Endothelial cell of umbilical vein (primary cell): ENCODE measurements at regions of chr3 and their contacts with region 1.

Region 1: GRCh38 chr3:184448311-184449160 is 68.7 kb downstream of the CHRD start:
- DNase-seq: peak; percentile 96
- H3K4me3 ChIP-seq: no peak overlapping the region
- H3K27ac ChIP-seq: peak overlapping the region; percentile 71
- H3K4me1 ChIP-seq: peaks cover 17% of the 10 kb centered on the region
- H3K27me3 ChIP-seq: no peaks in the 10 kb centered on the region
- CTCF ChIP-seq: no peak
- POLR2A ChIP-seq: no peak

Region 2: DNA sequence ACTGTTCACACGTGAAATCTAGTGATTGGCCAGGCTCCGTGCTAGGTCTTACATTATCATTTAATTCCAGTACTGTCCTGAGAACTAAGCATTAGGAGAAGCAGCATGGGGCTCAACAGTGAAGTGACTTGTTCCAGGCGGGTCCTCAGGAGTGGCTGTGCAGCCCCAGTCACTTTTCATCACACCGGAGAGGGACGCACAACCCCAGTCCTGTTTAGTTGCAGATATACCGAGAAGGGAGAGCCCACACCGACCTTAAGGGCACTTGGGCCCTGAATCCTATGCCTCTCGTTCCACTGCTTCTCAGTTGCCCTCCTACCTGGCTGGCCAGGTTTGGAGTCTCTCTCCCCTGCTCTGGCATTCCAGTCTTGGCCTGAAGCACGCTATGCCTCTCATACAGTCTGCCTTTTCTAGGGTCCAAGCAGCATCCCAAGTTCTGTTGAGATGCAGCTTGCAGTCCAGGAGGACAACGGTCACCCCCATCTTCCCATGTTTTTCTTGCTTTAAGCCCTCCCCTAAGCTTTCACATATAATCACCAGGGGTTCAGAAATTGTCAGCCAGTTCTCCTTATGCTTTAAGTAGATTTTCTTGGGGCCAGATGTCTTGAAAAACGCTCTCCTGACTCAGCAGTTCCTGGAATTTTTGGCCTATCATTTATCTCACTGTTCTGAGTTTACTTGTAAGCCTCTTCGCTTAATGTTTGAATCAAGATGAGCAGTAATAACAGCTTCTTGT is 101.0 kb before region 1 on chr3:
- CTCF ChIA-PET with region 1: no interaction called
- POLR2A ChIA-PET with region 1: no interaction called
- dilution Hi-C with region 1: no loop called
- intact Hi-C with region 1: no loop called
- DNase-seq: no peak
- H3K4me3 ChIP-seq: no peak overlapping the region
- H3K27ac ChIP-seq: no peak overlapping the region
- H3K4me1 ChIP-seq: no peaks in the 10 kb centered on the region
- H3K27me3 ChIP-seq: no peaks in the 10 kb centered on the region
- CTCF ChIP-seq: no peak
- POLR2A ChIP-seq: no peak

Region 3: GRCh38 chr3:184459355-184459754 is 10.8 kb after region 1 on chr3:
- CTCF ChIA-PET with region 1: interaction called, 4 read pairs
- POLR2A ChIA-PET with region 1: interaction called, 6 read pairs
- dilution Hi-C with region 1: no loop called
- intact Hi-C with region 1: loop called (anchors 1 kb)
- DNase-seq: peak; percentile 95
- H3K4me3 ChIP-seq: no peak overlapping the region
- H3K27ac ChIP-seq: peak overlapping the region; percentile 98
- H3K4me1 ChIP-seq: peaks cover 16% of the 10 kb centered on the region
- H3K27me3 ChIP-seq: no peaks in the 10 kb centered on the region
- CTCF ChIP-seq: no peak
- POLR2A ChIP-seq: peak; percentile 53

Region 4: GRCh38 chr3:184469423-184469822 is 20.9 kb after region 1 on chr3:
- CTCF ChIA-PET with region 1: interaction called, 7 read pairs
- POLR2A ChIA-PET with region 1: interaction called, 4 read pairs
- dilution Hi-C with region 1: no loop called
- intact Hi-C with region 1: loop called (anchors 1 kb)
- DNase-seq: peak; percentile 42
- H3K4me3 ChIP-seq: no peak overlapping the region
- H3K27ac ChIP-seq: no peak overlapping the region
- H3K4me1 ChIP-seq: peaks cover 17% of the 10 kb centered on the region
- H3K27me3 ChIP-seq: peaks cover 2 to 16% of the 10 kb centered on the region in 2 experiments
- CTCF ChIP-seq: peak; percentile 75 to 76
- POLR2A ChIP-seq: no peak